GM12878 (cell line): ENCODE measurements at regions of chr17 and their contacts with region 1.

Region 1: DNA sequence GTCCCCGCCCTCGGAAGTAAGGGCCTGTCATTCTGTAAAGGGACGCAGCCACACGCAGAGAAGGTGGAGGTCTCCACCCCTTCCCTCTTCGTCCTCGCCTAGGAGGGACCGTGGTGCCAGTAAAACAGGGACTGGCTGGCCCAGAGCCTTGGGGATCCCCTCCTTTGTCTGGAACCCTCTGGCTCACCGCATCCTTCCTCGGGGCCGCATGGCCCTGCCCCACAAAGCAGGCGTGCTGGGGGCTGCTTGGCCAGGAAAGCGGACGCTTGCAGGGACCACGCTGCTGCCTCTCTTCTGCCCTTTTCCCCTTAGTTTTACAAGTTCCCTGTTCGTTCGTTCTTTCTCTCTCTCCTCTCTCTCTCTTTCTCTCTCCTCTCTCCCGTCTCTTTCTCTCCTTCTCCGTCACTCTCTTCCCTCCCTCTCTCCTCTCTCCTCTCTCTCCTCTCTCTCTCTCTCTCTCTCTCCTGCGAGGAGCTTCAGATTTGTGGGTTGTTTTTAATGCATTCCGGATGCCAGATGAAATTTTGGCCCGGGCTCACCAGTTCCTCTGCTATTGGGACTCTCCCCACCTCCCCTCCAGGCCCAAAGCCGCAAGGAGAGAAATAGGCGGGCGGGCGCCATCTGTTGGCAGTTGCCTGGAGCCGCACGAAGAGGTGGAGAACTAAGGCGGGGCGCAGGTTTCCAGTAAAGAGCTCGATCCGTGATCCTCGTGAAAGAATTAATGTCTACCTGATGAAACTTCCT is 35.1 kb upstream of the CDRT4 start:
- DNase-seq: no peak
- ATAC-seq: peak; percentile 96
- H3K4me3 ChIP-seq: no peak overlapping the region
- H3K27ac ChIP-seq: no peak overlapping the region
- H3K4me1 ChIP-seq: peaks cover 3% of the 10 kb centered on the region
- H3K27me3 ChIP-seq: no peaks in the 10 kb centered on the region; a peak in 1 of 4 replicates
- CTCF ChIP-seq: peak; percentile 79 to 87 (median 80)
- EP300 ChIP-seq: no peak
- POLR2A ChIP-seq: no peak
- RAD21 ChIP-seq: peak; percentile 72

Region 2: GRCh38 chr17:15257258-15257788 is 245.2 kb before region 1 on chr17:
- CTCF ChIA-PET with region 1: interaction called, 33 read pairs
- POLR2A ChIA-PET with region 1: no interaction called
- RAD21 ChIA-PET with region 1: interaction called, 11 read pairs
- SMC1A ChIA-PET with region 1: interaction called, 5 read pairs
- in situ Hi-C with region 1: loop called (anchors 5 kb)
- intact Hi-C with region 1: loop called (anchors 1 kb)
- DNase-seq: peak; percentile 19
- ATAC-seq: peak; percentile 85
- H3K4me3 ChIP-seq: no peak overlapping the region
- H3K27ac ChIP-seq: no peak overlapping the region
- H3K4me1 ChIP-seq: no peaks in the 10 kb centered on the region
- H3K27me3 ChIP-seq: no peaks in the 10 kb centered on the region; a peak in 2 of 4 replicates
- CTCF ChIP-seq: peak; percentile 75 to 80 (median 77)
- EP300 ChIP-seq: no peak
- POLR2A ChIP-seq: no peak
- RAD21 ChIP-seq: peak; percentile 46

Region 3: GRCh38 chr17:15513058-15513858 is 10.7 kb after region 1 on chr17:
- CTCF ChIA-PET with region 1: interaction called, 15 read pairs
- POLR2A ChIA-PET with region 1: no interaction called
- RAD21 ChIA-PET with region 1: no interaction called
- SMC1A ChIA-PET with region 1: no interaction called
- in situ Hi-C with region 1: no loop called
- intact Hi-C with region 1: no loop called
- DNase-seq: no peak
- ATAC-seq: no peak
- H3K4me3 ChIP-seq: no peak overlapping the region
- H3K27ac ChIP-seq: no peak overlapping the region
- H3K4me1 ChIP-seq: no peaks in the 10 kb centered on the region
- H3K27me3 ChIP-seq: no peaks in the 10 kb centered on the region
- CTCF ChIP-seq: no peak
- EP300 ChIP-seq: no peak
- POLR2A ChIP-seq: no peak
- RAD21 ChIP-seq: no peak

Region 4: DNA sequence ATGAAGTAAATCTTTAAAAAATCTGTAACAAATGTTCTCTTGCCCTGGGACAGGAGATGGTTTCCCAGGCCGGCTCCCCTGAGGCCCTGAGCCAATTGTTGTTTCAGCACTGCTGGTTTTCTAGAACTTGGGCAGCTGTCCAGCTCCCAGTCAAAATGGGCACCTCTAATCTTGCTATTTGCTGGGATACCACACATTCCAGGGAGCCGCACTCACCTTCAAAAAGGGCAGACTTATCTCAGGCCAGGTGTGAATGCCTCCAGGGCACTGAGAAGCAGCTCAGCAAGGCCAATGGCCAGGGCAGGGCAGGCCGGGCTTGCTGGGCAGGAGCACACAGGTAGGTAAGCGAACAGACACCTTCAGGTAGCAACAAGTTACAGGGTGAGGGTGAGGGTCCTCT is 157.1 kb after region 1 on chr17:
- CTCF ChIA-PET with region 1: no interaction called
- POLR2A ChIA-PET with region 1: no interaction called
- RAD21 ChIA-PET with region 1: no interaction called
- SMC1A ChIA-PET with region 1: no interaction called
- in situ Hi-C with region 1: no loop called
- intact Hi-C with region 1: no loop called
- DNase-seq: no peak
- ATAC-seq: no peak
- H3K4me3 ChIP-seq: no peak overlapping the region
- H3K27ac ChIP-seq: no peak overlapping the region
- H3K4me1 ChIP-seq: peaks cover 7% of the 10 kb centered on the region
- H3K27me3 ChIP-seq: no peaks in the 10 kb centered on the region
- CTCF ChIP-seq: no peak
- EP300 ChIP-seq: no peak
- POLR2A ChIP-seq: no peak
- RAD21 ChIP-seq: no peak